ENCODE measurements at regions of chr15 and their contacts with region 1.

Region 1: GRCh38 chr15:81155375-81156218 is 21.5 kb downstream of the CFAP161 start:
- DNase-seq: peak; percentile 41
- CTCF ChIP-seq: peak; percentile 60

Region 2: DNA sequence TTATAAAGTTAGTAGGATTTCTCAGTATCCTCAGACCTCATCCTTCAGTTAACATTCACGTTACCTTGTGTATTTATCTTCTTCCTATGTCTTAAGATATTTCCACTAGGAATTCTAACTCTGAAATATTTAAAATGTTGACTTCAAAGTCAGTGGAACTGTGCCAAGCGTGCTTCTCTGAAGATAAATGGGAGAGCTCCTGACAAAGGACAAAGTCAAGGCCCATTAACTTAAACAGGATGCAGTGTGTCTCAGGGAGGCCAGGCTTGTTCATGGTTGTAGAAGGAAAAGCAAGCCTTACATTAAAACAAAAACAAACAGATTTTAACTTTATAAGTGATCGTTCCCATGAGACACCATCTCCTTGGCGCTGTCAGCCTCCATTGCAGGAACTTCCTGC is 419.0 kb before region 1 on chr15:
- CTCF ChIA-PET with region 1: no interaction called
- POLR2A ChIA-PET with region 1: no interaction called
- DNase-seq: no peak
- CTCF ChIP-seq: no peak

Region 3: DNA sequence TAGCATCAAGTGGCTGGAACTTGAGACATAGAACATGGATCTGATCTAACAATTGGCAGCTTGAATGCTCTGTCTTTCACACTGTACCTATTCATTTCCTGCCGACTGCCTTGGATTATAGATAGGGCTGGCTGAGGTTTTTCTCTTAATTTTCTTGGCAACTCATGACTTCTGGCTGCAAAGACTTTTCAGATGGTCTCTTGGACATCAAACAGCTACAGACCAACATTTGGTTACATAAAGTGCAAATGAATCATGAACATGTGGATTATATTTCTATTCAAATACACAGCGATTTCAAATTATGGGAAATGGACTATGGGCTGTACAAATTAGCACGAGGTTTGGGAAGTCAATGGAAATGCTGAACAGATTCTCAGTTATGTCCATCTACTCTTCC is 14.9 kb after region 1 on chr15:
- CTCF ChIA-PET with region 1: interaction called, 23 read pairs
- POLR2A ChIA-PET with region 1: no interaction called
- DNase-seq: no peak
- CTCF ChIP-seq: no peak

Measured in GM10248 (cell line).